ENCODE measurements at regions of chr6 and their contacts with region 1.

Region 1: GRCh38 chr6:84652356-84653026 is 111.9 kb downstream of the TBX18 start:
- DNase-seq: no peak

Region 2: GRCh38 chr6:83546636-83547035 is 1105.9 kb before region 1 on chr6:
- intact Hi-C with region 1: no loop called
- DNase-seq: no peak

Region 3: DNA sequence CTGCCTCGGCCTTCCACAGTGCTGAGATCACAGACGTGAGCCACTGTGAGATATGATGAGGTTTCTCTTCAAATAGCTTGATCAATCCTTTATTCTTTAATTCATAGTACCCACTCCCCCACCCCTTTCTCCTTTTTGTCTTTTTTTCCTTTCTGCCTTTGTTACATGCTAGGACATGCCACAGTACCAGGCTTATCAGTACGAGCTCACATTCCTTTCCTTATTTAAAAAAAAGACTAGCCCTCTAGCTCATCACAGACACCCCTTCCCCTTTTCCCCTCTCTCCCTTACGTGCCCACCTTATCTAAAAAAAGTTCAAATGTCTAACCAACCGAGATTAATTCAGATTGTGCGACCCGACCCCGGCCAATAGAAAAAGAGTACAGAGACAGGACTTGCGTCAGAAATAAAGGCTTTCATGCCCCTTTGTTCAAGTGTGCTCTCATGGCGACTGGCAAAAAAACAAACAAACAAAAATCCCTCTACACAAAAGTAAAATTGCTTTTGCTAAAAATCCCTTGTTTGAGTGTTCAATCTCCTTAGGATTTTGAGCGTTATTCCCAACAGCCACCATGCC is 569.7 kb before region 1 on chr6:
- intact Hi-C with region 1: loop called in 1 of 2 experiments (anchors 10 kb)
- DNase-seq: no peak

Region 4: DNA sequence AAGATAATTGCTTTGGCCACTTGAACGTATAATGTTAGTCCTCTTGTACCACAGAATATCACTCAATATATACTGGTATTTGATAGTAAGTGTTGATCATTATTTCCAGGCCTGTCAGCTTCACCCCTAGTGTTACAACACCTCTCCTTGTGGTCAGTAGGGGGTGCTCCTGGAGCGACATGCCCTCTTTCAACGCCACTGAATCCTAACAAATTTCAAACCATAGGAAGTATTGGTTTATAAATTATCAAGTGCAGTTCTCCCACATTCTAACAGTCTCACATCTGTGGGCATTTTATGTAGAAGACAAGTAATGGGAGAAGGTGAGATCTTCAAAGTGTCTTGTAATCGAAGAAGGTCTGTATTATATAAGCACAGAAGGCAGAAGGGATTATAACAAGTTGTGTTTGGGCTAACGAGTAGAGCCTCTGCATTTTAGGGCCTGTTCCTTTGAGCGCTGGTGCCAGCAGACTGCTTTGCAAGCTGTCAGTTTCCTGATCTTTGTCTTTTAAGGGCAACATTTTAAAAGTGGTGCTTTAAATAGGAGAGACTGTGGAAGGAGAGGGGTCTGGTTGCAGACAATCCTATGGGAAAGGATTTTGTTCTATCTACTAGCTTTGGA is 368.0 kb before region 1 on chr6:
- intact Hi-C with region 1: no loop called
- DNase-seq: no peak

Measured in posterior vena cava (tissue), 2 donors.